PC-3 (cell line): ENCODE measurements at regions of chr2 and their contacts with region 1.

Region 1: GRCh38 chr2:146927080-146927711 is 917.6 kb upstream of the ACVR2A start:
- DNase-seq: peak; percentile 73
- ATAC-seq: peak; percentile 97
- H3K4me3 ChIP-seq: no peak overlapping the region
- H3K27ac ChIP-seq: no peak overlapping the region
- H3K4me1 ChIP-seq: no peaks in the 10 kb centered on the region
- H3K27me3 ChIP-seq: no peaks in the 10 kb centered on the region
- CTCF ChIP-seq: peak; percentile 83

Region 2: GRCh38 chr2:146734042-146734820 is 193.0 kb before region 1 on chr2:
- CTCF ChIA-PET with region 1: no interaction called
- POLR2A ChIA-PET with region 1: no interaction called
- intact Hi-C with region 1: loop called (anchors 1 kb)
- DNase-seq: peak; percentile 84
- ATAC-seq: peak; percentile 87
- H3K4me3 ChIP-seq: peak overlapping the region; percentile 22; the same call in 1 of the 2 replicates
- H3K27ac ChIP-seq: no peak overlapping the region
- H3K4me1 ChIP-seq: peaks cover 4% of the 10 kb centered on the region; the same call in 1 of the 2 replicates
- H3K27me3 ChIP-seq: no peaks in the 10 kb centered on the region
- CTCF ChIP-seq: peak; percentile 86

Region 3: GRCh38 chr2:146874260-146874658 is 52.9 kb before region 1 on chr2:
- CTCF ChIA-PET with region 1: no interaction called
- POLR2A ChIA-PET with region 1: no interaction called
- intact Hi-C with region 1: no loop called
- DNase-seq: peak; percentile 98
- ATAC-seq: peak; percentile 95
- H3K4me3 ChIP-seq: peak overlapping the region; percentile 39
- H3K27ac ChIP-seq: peak overlapping the region; percentile 89
- H3K4me1 ChIP-seq: peaks cover 25% of the 10 kb centered on the region
- H3K27me3 ChIP-seq: no peaks in the 10 kb centered on the region
- CTCF ChIP-seq: no peak

Region 4: DNA sequence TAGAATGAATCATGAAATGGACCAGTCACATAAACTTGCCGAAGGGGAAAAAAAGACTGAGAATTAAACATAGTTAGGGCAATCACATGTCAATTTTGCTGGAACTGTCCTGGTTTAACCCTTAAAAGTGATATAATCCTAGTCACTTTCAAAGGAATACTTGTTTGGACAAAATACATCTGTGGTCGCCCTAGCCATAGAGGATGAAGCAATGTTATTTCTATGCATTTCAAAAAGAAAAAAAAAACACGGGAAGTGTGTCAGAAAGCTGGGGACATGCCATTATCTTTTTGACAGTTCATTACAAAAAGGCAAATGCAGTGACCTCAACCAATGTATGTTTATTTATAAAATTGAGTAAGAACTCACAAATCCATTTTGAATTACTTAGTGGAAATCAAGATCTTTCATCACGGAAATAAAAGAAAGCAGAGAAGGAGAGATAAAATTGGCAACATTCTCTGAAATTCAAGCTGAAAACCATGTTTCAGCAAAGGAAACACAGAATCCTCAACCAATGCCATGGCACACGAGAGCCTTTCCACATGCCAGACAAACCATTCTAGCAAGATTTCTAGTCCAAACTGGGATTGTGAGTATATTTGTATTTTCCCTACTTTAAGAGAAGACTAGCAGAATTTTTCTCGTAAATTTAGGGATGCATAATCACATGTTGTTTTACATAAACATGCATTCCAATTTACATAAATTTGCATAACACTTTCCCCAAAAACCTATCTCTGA is 63.3 kb after region 1 on chr2:
- CTCF ChIA-PET with region 1: no interaction called
- POLR2A ChIA-PET with region 1: no interaction called
- intact Hi-C with region 1: loop called (anchors 2 kb)
- DNase-seq: no peak
- ATAC-seq: no peak
- H3K4me3 ChIP-seq: no peak overlapping the region
- H3K27ac ChIP-seq: no peak overlapping the region
- H3K4me1 ChIP-seq: peaks cover 44% of the 10 kb centered on the region
- H3K27me3 ChIP-seq: no peaks in the 10 kb centered on the region
- CTCF ChIP-seq: no peak

Region 5: GRCh38 chr2:147082850-147083522 is 155.8 kb after region 1 on chr2:
- CTCF ChIA-PET with region 1: interaction called, 4 read pairs
- POLR2A ChIA-PET with region 1: no interaction called
- intact Hi-C with region 1: loop called (anchors 10 kb)
- DNase-seq: peak; percentile 87
- ATAC-seq: peak; percentile 67
- H3K4me3 ChIP-seq: no peak overlapping the region
- H3K27ac ChIP-seq: no peak overlapping the region
- H3K4me1 ChIP-seq: no peaks in the 10 kb centered on the region
- H3K27me3 ChIP-seq: no peaks in the 10 kb centered on the region
- CTCF ChIP-seq: peak; percentile 96

Region 6: DNA sequence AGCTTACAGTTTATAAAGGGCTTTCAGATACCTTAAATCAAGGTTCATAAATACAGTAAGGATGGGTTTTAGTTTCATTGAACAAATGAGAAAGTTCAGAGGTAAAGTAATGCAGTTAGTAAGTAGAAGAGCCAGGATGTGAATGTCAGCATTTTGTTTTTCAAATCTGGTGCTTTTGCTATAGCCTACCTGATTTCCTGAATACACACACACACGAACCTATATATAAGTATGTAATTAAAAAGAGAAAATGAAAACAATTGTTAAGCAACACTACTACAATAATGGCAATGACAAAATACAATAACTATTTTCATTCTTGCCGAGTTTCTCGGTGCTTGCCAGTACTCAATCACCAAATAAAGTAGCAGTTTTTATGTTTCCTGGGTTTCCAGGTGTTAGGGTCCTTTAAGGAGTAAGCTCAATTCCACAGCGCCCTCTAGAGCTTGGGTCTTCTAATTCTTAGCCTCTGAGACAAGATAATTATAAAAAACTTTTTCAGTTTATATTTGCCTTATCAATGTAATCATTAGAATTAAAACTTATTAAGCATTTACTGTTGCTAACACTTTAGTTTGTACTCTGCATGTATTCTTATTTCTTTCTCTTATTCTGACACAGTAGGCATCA is 404.7 kb after region 1 on chr2:
- CTCF ChIA-PET with region 1: interaction called, 4 read pairs
- POLR2A ChIA-PET with region 1: no interaction called
- intact Hi-C with region 1: loop called (anchors 2 kb)
- DNase-seq: peak; percentile 79
- ATAC-seq: peak; percentile 67
- H3K4me3 ChIP-seq: no peak overlapping the region
- H3K27ac ChIP-seq: no peak overlapping the region
- H3K4me1 ChIP-seq: no peaks in the 10 kb centered on the region
- H3K27me3 ChIP-seq: no peaks in the 10 kb centered on the region
- CTCF ChIP-seq: peak; percentile 89